Activated T-helper 2 cell treated with anti-CD3 and anti-CD28 coated beads, Interferon-gamma antibody, Interleukin-2, Interleukin-4, amounts not matched to agents 10 μg/mL and 5 μg/mL and 100 μg/mL, durations not matched to agents 14 hours and 24 hours and 36 hours (primary cell): ENCODE measurements at regions of chr1 and their contacts with region 1.

Region 1: GRCh38 chr1:1273512-1274298 is at the start of gene UBE2J2:
- DNase-seq: peak; percentile 87
- H3K4me3 Mint-ChIP-seq: peak within 1 kb of the TSS; percentile 81
- H3K27ac Mint-ChIP-seq: peak within 1 kb of the TSS; percentile 69
- H3K4me1 Mint-ChIP-seq: peaks cover 29% of the 10 kb centered on the region
- H3K27me3 Mint-ChIP-seq: no peaks in the 10 kb centered on the region
- total RNA-seq, gene UBE2J2: 79.3 and 81.0 TPM in 2 replicates

Region 2: GRCh38 chr1:1206376-1207260 is 67.1 kb before region 1 on chr1 and contains the start of gene TNFRSF18:
- intact Hi-C with region 1: loop called (anchors 2 kb)
- DNase-seq: no peak
- H3K4me3 Mint-ChIP-seq: peak within 1 kb of the TSS; percentile 82
- H3K27ac Mint-ChIP-seq: peak within 1 kb of the TSS; percentile 68
- H3K4me1 Mint-ChIP-seq: peaks cover 19% of the 10 kb centered on the region
- H3K27me3 Mint-ChIP-seq: no peaks in the 10 kb centered on the region
- total RNA-seq, gene TNFRSF18: 219 and 231 TPM in 2 replicates

Region 3: DNA sequence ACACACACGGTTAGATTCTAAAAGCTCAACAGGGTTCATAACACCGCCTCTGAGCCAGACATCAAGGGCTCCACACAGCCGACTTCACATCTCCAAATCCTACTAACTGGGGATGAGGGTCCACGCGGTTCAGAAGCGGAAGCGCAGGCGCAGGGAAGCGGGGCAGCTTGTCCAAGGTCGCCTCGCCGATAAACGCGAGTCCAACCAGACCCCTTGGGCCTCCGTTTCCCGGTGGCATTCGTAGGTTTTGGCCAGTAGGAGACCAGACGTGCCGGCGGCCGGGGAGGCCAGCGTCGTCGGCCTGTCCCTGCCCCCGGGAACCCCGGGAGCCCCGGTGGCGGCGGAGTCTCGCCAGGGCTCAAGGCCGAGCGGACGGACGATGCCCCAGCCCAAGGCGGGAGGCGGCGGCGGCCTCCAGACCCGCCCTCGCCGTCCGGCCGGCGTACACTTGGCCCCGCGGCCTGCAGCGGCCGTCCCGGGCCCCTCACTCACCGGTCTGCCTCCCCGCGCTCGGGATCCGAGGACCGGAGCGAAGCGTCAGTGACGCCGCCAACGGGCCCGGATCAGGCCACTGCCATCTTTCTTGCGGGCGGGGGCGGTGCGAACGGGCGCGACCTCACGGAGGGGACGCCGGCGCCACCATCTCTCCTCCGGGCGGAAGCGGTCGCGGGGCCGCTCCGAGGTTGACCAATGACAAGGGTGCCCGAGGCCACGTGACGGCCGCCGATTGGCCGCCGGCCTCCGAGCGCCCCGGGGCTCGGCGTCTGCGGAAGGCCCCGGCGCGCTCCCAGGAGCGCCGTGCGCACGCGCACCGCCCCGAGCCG is 42.1 kb before region 1 on chr1 and contains the start of gene SDF4:
- intact Hi-C with region 1: loop called (anchors 5 kb)
- DNase-seq: peak; percentile 97
- H3K4me3 Mint-ChIP-seq: peak within 1 kb of the TSS; percentile 92
- H3K27ac Mint-ChIP-seq: peak within 1 kb of the TSS; percentile 81
- H3K4me1 Mint-ChIP-seq: peaks cover 23% of the 10 kb centered on the region
- H3K27me3 Mint-ChIP-seq: no peaks in the 10 kb centered on the region
- total RNA-seq, gene SDF4: 161 and 164 TPM in 2 replicates

Region 4: DNA sequence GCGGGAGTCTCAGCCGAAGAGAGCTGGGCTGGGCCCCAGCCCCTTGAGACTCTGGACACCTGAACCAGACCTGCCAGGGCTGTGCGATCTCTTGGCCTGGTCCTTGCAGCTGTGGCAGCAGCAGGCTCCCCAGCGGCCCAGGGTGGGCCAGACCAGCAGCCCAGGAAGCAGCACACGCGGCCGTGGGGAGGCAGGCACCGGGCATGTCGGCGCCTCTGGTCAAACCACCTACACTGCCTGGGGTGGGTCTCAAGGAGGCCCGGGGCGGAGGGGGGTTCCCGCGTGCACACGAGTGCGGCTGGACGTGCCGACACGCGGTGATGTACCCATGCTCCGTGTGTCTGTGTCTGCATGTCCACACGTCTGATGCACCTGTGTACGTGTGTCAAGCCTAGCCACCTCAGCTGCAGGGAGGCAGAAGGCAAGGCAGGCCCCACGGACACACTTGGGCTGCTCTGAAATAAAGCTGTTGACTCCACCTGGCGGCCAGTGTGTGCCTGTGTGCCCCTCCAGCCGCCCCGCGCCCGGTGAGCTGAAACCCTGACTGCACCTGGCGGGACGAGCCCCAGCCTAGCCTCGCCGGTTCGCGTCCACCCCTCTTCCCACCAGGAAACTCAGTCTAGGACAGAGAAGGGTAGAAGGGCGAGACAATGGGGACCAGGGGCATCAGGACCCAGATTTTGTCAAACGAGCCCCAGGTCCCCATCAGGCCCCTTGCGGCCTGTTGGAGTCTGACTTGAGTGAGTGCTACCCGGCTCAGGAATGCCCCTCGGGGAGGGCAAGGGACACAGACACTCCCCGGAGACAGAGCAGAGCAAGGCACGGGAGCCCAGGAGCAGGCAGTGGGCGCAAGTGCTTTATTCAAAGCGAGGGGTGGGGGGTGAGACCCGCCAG is 18.1 kb after region 1 on chr1:
- intact Hi-C with region 1: no loop called
- DNase-seq: peak; percentile 51
- H3K4me3 Mint-ChIP-seq: no peak overlapping the region
- H3K27ac Mint-ChIP-seq: no peak overlapping the region
- H3K4me1 Mint-ChIP-seq: no peaks in the 10 kb centered on the region
- H3K27me3 Mint-ChIP-seq: no peaks in the 10 kb centered on the region